ENCODE measurements at regions of chr4 and their contacts with region 1.

Region 1: DNA sequence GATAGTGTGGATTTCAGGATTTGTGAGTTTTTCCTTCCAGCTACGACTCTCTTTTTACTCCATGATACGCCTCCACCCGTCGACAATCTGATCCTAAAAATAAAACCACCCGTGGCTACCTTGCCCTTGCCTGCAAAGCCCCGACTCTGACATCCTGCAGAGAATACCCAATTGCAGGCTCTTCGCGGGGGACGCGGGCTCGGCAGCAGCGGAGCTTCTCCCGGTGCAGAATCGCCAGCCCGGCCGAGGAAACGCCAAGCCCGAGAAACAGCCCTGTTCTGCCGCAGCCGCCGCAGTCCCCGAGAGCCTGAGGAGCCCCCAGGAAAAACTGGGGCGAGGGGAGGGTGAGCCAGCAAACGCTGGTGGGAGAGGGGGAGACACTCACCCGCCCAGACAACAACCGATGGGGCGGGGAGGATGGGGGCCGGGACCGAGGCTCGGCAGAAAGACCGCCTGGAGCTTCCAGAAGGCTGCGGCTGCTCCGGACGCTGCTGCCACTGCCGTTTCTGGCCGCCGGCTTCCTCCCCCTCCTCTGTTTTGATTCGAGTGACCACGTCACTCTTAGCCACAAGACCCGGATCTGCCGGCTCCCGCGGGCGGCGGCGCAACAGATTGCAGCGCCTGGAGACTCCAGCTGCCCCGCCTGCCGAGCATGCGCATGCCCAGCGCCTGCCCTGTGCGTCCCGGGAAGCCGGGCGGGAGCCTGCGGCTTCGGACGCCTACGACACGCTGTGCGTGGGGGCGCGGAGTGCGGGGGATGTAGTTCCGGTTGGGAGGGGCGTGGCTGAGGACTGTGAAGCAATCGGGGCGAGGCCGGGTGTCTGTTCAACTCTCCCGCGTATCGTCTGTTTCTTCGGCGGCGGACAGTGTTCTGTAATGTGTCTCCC is at the start of gene SMIM14:
- DNase-seq: peak; percentile 99
- H3K4me3 ChIP-seq: peak within 1 kb of the TSS; percentile 87 to 96 (median 90)
- H3K27ac ChIP-seq: peak within 1 kb of the TSS; percentile 94 to 98 (median 95)
- H3K4me1 ChIP-seq: peaks cover 0 to 27% of the 10 kb centered on the region in 2 donors
- H3K27me3 ChIP-seq: no peaks in the 10 kb centered on the region
- CTCF ChIP-seq: peak in 4 of 6 experiments; percentile 10 to 57 (median 25)
- POLR2A ChIP-seq: peak; percentile 20 to 99
- total RNA-seq, gene SMIM14: 52.1 to 72.3 (median 59.2) TPM

Region 2: DNA sequence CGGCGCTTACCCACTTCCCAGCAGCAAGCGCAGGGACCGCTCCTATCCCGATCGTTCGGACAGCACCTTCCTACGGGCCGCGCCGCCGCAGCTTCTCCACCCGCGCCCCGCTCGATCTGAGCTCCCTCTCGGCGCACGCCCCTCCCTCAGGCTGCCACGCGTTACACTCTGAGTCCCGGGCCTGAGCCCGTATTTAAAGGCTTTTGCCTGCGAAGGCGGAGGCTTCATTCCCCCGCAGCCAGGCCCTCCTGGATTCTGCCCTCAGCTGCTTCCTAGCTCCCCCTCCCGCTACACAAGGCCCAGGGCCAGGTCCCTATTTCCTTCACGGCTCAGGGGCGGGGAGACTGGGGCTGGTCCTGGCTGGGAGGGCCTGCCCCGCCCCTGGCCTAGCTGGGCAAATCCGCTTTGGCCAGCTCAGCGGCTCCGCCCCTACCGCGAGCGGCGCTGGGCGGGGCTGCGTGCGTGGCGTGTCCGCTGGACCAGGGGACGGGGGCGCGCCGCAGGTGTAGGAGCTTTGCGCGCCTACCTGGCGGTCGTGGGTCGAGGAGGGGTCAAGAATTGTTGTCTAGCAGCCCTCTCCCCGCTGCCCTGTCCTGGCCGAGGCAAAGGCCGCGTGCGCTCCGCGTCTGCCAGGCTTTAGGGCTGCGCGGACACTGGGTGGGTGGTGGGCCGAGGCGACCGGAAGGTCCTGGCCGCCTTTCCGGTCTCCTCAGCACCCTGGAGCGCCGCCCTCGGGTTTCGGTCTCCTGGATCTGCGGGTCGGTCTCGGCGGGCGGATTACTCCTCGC is 111.1 kb before region 1 on chr4 and contains the start of gene UGDH:
- intact Hi-C with region 1: loop called (anchors 5 kb)
- DNase-seq: peak; percentile 99
- H3K4me3 ChIP-seq: peak within 1 kb of the TSS; percentile 42 to 81 (median 50)
- H3K27ac ChIP-seq: peak within 1 kb of the TSS; percentile 90 to 95 (median 90)
- H3K4me1 ChIP-seq: peaks cover 14 to 18% of the 10 kb centered on the region in 2 donors
- H3K27me3 ChIP-seq: no peaks in the 10 kb centered on the region
- CTCF ChIP-seq: peak in 2 of 6 experiments; percentile 8 to 9
- POLR2A ChIP-seq: peak; percentile 84 to 98
- total RNA-seq, gene UGDH: 40.1 to 58.7 (median 48.1) TPM

Measured in thyroid gland (tissue), 4 donors.